ENCODE measurements at regions of chr11 and their contacts with region 1.

Region 1: GRCh38 chr11:27124514-27125264 is 84.1 kb downstream of the BBOX1 start:
- ATAC-seq: peak in 3 of 8 experiments; percentile 36 to 64 (median 53)
- H3K4me3 ChIP-seq: no peak overlapping the region
- H3K27ac ChIP-seq: no peak overlapping the region
- H3K4me1 ChIP-seq: peaks cover 0 to 6% of the 10 kb centered on the region in 2 donors

Region 2: GRCh38 chr11:26753723-26754504 is 370.8 kb before region 1 on chr11:
- in situ Hi-C with region 1: loop called in 1 of 9 experiments (anchors 25 kb)
- ATAC-seq: peak; percentile 89 to 99 (median 95)
- H3K4me3 ChIP-seq: no peak overlapping the region
- H3K27ac ChIP-seq: no peak overlapping the region
- H3K4me1 ChIP-seq: peaks cover 9 to 23% of the 10 kb centered on the region in 2 donors

Region 3: DNA sequence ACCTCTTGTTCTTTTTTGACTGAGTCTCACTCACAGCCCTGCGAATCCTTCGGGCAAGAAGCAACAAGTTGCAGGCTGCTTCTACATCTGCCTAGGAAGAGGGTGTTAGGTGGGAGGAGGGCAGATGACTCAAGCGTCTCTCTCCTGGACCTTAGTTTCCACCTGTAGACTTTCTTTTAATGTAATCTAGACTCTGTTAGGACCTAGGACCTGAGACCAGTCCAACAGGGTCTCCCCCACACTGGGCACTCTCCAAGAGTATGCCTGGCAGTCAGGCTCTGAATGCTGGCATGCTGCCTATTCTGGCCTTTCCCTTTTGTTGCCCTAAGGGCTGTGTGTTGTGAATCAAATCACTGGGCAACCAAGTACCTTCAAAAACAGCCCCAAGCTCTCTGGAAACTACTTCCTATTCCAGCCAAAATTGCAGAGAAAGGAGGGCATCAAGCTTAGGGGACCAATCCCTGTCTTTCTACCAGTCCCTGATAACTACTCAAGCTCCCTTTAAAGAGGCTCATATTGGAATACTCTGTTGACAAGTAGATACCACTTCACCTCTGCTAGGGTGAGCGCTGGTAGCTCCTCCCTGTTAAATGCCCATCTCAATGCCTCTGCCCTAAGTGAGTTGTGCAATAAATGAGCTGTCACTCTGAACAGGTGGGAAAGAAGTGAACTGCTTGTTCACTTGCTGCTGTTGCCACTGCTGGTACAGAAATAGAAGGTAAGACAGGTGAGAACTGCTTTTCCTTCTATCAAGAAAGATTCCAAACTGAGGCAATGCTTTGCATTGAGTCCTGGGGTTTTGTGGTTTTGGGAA is 84.2 kb before region 1 on chr11 and contains the start of gene BBOX1:
- in situ Hi-C with region 1: loop called in 1 of 9 experiments (anchors 25 kb)
- ATAC-seq: peak in 6 of 8 experiments; percentile 47 to 100 (median 77)
- H3K4me3 ChIP-seq: no peak within 1 kb of the TSS
- H3K27ac ChIP-seq: no peak within 1 kb of the TSS
- H3K4me1 ChIP-seq: no peaks in the 10 kb centered on the region
- total RNA-seq, gene BBOX1: 0.38 to 11.4 (median 0.83) TPM